ENCODE measurements at regions of chr7 and their contacts with region 1.

Region 1: GRCh38 chr7:98631535-98631934 is 14.4 kb downstream of the NPTX2 start:
- DNase-seq: no peak
- ATAC-seq: no peak
- H3K4me3 Mint-ChIP-seq: no peak overlapping the region
- H3K27ac Mint-ChIP-seq: no peak overlapping the region
- H3K4me1 Mint-ChIP-seq: no peaks in the 10 kb centered on the region
- H3K27me3 Mint-ChIP-seq: peaks cover 24% of the 10 kb centered on the region
- CTCF ChIP-seq: no peak

Region 2: GRCh38 chr7:98372993-98373392 is 258.5 kb before region 1 on chr7:
- CTCF ChIA-PET with region 1: no interaction called
- POLR2A ChIA-PET with region 1: no interaction called
- intact Hi-C with region 1: no loop called
- DNase-seq: no peak
- ATAC-seq: no peak
- H3K4me3 Mint-ChIP-seq: no peak overlapping the region
- H3K27ac Mint-ChIP-seq: no peak overlapping the region
- H3K4me1 Mint-ChIP-seq: no peaks in the 10 kb centered on the region
- H3K27me3 Mint-ChIP-seq: no peaks in the 10 kb centered on the region
- CTCF ChIP-seq: no peak

Region 3: DNA sequence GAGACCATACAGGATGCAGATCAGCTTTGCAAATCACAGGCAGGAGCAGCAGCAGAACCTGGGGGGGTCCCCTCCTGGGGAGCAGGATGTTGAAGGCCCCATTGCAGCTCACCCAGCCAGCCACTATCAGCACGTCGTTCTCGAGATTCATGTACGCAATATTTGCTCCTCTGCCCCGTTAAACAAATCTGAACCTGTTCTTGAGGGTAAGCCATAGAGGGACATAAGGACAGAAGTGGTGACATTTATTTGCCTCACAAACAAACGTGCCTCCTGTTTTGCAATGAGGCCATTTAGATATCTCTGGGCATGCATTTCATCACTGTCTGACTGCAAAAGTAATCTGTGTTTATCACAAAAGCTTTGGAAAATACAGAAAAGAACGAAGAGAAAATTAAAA is 143.4 kb before region 1 on chr7:
- CTCF ChIA-PET with region 1: no interaction called
- POLR2A ChIA-PET with region 1: interaction called, 10 read pairs
- intact Hi-C with region 1: no loop called
- DNase-seq: no peak
- ATAC-seq: no peak
- H3K4me3 Mint-ChIP-seq: no peak overlapping the region
- H3K27ac Mint-ChIP-seq: no peak overlapping the region
- H3K4me1 Mint-ChIP-seq: no peaks in the 10 kb centered on the region
- H3K27me3 Mint-ChIP-seq: no peaks in the 10 kb centered on the region
- CTCF ChIP-seq: no peak

Region 4: DNA sequence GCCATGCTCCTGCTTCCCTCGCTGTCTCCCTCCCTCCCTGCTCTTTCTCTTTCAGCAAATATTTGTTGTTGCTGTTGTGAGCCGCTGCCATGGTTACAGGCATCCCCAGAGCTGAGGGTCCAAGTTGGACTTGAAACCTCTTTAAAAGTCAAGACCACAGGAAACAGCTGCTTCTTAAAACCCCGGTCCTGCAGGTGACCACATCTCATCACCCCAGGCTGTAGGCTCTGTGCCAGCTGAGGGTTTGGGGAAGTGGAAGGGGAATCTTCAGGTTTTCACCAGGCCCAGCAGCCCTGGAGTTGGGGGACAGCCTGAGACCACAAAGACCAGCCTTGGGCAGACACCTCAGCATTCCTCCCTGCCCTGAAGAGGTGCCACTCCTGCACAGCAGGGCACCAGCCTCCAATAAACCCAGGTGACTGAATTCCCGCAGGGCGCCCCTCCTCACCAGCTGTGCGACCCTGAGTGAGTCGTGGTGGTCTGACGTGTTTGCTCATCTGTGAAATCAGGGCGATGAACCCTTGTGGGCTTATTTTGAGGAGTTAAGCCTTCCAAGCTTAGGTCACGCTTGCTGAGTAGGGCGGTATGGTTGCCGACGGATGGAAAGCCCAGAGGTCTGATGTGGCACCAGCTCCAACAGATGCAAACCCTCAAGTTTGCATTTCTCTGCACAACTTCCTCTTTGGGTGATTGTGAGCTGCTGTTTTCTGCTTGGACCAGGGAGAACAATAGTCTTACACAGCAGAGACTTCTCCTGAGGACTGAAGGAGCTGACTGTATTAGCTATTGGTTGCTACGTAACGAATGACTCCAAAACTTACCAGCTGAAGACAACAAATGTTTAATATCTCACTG is 10.3 kb after region 1 on chr7:
- CTCF ChIA-PET with region 1: no interaction called
- POLR2A ChIA-PET with region 1: no interaction called
- intact Hi-C with region 1: no loop called
- DNase-seq: no peak
- ATAC-seq: peak; percentile 71
- H3K4me3 Mint-ChIP-seq: peak overlapping the region; percentile 44
- H3K27ac Mint-ChIP-seq: peak overlapping the region; percentile 67
- H3K4me1 Mint-ChIP-seq: peaks cover 21% of the 10 kb centered on the region
- H3K27me3 Mint-ChIP-seq: peaks cover 6% of the 10 kb centered on the region
- CTCF ChIP-seq: no peak

Region 5: GRCh38 chr7:98703916-98704315 is 72.4 kb after region 1 on chr7:
- CTCF ChIA-PET with region 1: no interaction called
- POLR2A ChIA-PET with region 1: no interaction called
- intact Hi-C with region 1: no loop called
- DNase-seq: no peak
- ATAC-seq: no peak
- H3K4me3 Mint-ChIP-seq: no peak overlapping the region
- H3K27ac Mint-ChIP-seq: no peak overlapping the region
- H3K4me1 Mint-ChIP-seq: peaks cover 2% of the 10 kb centered on the region
- H3K27me3 Mint-ChIP-seq: peaks cover 17% of the 10 kb centered on the region
- CTCF ChIP-seq: no peak

Measured in activated B cell treated with CpG ODN at 0.5 μM for 24 hours (primary cell).